Heart right ventricle (tissue), 16 donors: ENCODE measurements at regions of chr6 and their contacts with region 1.

Region 1: GRCh38 chr6:121652726-121653623 is 217.5 kb downstream of the GJA1 start:
- DNase-seq: no peak
- ATAC-seq: peak in 6 of 8 donors; percentile 26 to 80 (median 58)
- H3K4me3 ChIP-seq: no peak overlapping the region
- H3K27ac ChIP-seq: peak overlapping the region; percentile 3 to 82 (median 64)
- H3K4me1 ChIP-seq: peaks cover 0 to 27% (median 4%) of the 10 kb centered on the region in 9 donors
- H3K27me3 ChIP-seq: no peaks in the 10 kb centered on the region
- CTCF ChIP-seq: no peak

Region 2: DNA sequence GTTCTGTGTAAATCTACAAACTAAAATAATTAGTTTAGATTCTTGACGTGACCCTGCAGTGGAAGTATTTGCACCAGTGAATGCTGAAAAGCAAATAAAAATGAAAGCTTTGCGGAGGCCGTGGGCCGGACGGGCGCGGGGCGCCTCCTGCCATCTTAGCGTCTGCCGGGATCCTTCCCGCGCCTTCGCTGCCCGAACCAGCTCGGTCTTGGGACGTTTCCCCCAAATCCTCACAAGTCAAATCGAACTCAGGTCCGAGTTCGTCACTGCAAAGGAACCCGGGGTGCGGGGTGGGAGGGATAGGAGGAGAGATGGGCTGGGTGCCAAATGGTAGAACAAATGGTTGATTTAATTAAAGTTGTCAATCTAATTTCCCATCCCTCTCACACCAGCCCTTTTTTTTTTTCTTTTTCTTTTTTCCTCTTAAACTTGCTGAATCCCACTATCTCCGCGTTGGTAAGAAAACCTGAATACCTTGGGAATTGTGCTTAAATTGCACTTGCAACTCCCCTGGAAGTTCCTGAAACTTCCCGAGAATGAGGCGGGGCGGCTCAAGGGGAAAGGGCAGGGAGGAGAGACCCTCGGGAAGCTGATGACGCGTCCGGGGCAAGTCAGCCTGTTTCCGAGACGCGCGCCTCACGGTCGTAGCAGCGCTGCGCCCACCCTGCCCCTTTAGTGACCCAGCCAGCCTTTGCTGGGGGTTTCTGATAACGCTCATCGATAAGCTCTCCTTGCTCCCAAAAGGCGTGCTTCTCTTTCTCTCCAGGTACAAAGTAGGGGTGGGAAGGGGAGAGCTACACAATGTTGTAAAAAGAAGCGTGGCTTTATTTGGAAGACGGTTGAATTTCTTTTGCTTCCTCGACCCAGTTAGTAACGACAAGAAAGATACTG is 215.8 kb before region 1 on chr6:
- intact Hi-C with region 1: loop called in 4 of 10 experiments (anchors 5 to 10 kb)
- DNase-seq: peak; percentile 50 to 53
- ATAC-seq: peak; percentile 56 to 72 (median 64)
- H3K4me3 ChIP-seq: peak overlapping the region; percentile 54 to 82 (median 72)
- H3K27ac ChIP-seq: peak overlapping the region; percentile 83 to 96 (median 90)
- H3K4me1 ChIP-seq: peaks cover 0 to 41% (median 18%) of the 10 kb centered on the region in 9 donors
- H3K27me3 ChIP-seq: peaks cover 0 to 35% (median 0%) of the 10 kb centered on the region in 7 donors
- CTCF ChIP-seq: no peak

Region 3: DNA sequence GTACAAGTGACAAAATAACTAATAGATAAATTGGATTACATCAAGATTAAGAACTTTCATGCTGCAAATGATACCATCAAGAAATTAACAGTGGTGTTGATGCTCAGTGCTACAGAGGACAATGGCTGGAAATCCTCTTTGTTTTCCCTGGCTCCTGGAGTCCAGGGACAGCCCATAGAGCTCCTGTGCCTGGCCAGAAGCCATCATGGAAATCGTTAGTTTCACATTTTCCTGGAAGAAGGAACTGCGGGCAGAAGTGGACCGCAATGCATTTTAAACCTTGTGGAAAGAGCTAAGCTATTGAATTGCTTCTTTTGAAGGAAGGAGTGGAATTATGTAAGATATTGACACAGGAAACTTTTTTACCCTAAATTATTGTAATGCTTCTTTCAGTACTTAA is 58.5 kb after region 1 on chr6:
- intact Hi-C with region 1: loop called in 2 of 10 experiments (anchors 5 kb)
- DNase-seq: peak in 1 of 2 donors; percentile 74
- ATAC-seq: peak; percentile 62 to 94 (median 87)
- H3K4me3 ChIP-seq: no peak overlapping the region
- H3K27ac ChIP-seq: peak overlapping the region in 5 of 10 donors; percentile 23 to 63 (median 37)
- H3K4me1 ChIP-seq: peaks cover 0 to 17% (median 0%) of the 10 kb centered on the region in 9 donors
- H3K27me3 ChIP-seq: no peaks in the 10 kb centered on the region
- CTCF ChIP-seq: no peak

Region 4: GRCh38 chr6:121717686-121718085 is 64.7 kb after region 1 on chr6:
- intact Hi-C with region 1: loop called in 3 of 10 experiments (anchors 5 to 10 kb)
- DNase-seq: no peak
- ATAC-seq: no peak
- H3K4me3 ChIP-seq: no peak overlapping the region
- H3K27ac ChIP-seq: no peak overlapping the region
- H3K4me1 ChIP-seq: peaks cover 0 to 2% (median 0%) of the 10 kb centered on the region in 9 donors
- H3K27me3 ChIP-seq: no peaks in the 10 kb centered on the region
- CTCF ChIP-seq: no peak

Region 5: DNA sequence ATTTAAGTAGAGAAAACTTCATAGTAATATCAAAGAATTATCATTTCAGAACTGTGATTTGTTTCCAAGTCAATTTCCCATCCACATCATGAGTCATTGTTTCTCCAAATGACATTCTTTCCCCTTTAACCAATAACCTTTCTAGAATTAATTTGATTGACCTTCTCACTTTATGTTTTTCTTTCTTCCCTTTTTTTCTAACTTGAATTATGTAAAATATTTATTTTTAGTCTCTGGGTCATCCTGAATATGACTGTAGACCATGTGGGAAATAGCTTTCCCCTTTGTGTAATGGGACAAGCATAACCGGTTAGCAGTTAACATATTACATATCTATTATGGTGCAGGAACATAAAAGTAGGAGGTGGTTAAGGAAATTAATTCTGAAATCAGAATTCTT is 73.6 kb after region 1 on chr6:
- intact Hi-C with region 1: loop called in 1 of 10 experiments (anchors 10 kb)
- DNase-seq: no peak
- ATAC-seq: peak in 2 of 8 donors; percentile 47 to 61
- H3K4me3 ChIP-seq: no peak overlapping the region
- H3K27ac ChIP-seq: peak overlapping the region in 4 of 10 donors; percentile 6 to 38 (median 14)
- H3K4me1 ChIP-seq: peaks cover 0 to 29% (median 0%) of the 10 kb centered on the region in 9 donors
- H3K27me3 ChIP-seq: no peaks in the 10 kb centered on the region
- CTCF ChIP-seq: no peak

Region 6: GRCh38 chr6:121771937-121772720 is 119.2 kb after region 1 on chr6:
- intact Hi-C with region 1: loop called in 1 of 10 experiments (anchors 5 kb)
- DNase-seq: no peak
- ATAC-seq: peak in 2 of 8 donors; percentile 41 to 63
- H3K4me3 ChIP-seq: no peak overlapping the region
- H3K27ac ChIP-seq: peak overlapping the region in 3 of 10 donors; percentile 36 to 73 (median 63)
- H3K4me1 ChIP-seq: peaks cover 0 to 32% (median 4%) of the 10 kb centered on the region in 9 donors
- H3K27me3 ChIP-seq: no peaks in the 10 kb centered on the region
- CTCF ChIP-seq: no peak

Region 7: DNA sequence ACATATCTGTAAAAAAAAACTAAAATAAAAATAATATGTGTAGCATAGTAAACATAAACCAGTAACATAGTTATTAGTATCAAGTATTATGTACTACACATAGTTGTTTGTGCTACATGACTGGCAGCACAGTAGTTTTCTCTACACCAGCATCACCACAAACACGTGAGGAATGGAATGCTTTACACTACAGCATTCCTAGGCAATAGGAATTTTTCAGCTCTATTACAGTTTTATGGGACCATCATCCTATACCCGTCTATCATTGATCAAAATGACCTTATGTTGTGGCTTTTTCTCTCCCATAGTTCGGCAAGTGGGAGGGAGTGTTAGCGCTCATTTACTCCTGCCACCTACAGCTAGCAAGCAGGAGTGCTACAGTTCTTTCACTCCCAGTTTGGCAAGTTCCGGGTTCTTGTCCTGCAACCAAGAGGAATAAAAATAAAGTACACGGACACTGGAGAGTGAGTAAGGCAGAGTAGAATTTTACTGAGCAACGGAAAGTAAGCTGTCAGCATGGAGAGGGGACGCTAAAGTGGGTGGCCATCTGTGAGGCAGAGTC is 549.7 kb after region 1 on chr6:
- intact Hi-C with region 1: no loop called
- DNase-seq: no peak
- ATAC-seq: no peak
- H3K4me3 ChIP-seq: no peak overlapping the region
- H3K27ac ChIP-seq: no peak overlapping the region
- H3K4me1 ChIP-seq: peaks cover 0 to 4% (median 0%) of the 10 kb centered on the region in 9 donors
- H3K27me3 ChIP-seq: no peaks in the 10 kb centered on the region
- CTCF ChIP-seq: no peak